Activated T-helper 2 cell treated with anti-CD3 and anti-CD28 coated beads, Interferon-gamma antibody, Interleukin-2, Interleukin-4, amounts not matched to agents 10 μg/mL and 5 μg/mL and 100 μg/mL, durations not matched to agents 14 hours and 24 hours and 36 hours (primary cell): ENCODE measurements at regions of chr7 and their contacts with region 1.

Region 1: GRCh38 chr7:25951031-25951948 is 200.7 kb upstream of the NFE2L3 start:
- DNase-seq: peak; percentile 90
- H3K4me3 Mint-ChIP-seq: peak overlapping the region; percentile 90
- H3K27ac Mint-ChIP-seq: peak overlapping the region; percentile 82
- H3K4me1 Mint-ChIP-seq: peaks cover 13% of the 10 kb centered on the region
- H3K27me3 Mint-ChIP-seq: peaks cover 16% of the 10 kb centered on the region

Region 2: DNA sequence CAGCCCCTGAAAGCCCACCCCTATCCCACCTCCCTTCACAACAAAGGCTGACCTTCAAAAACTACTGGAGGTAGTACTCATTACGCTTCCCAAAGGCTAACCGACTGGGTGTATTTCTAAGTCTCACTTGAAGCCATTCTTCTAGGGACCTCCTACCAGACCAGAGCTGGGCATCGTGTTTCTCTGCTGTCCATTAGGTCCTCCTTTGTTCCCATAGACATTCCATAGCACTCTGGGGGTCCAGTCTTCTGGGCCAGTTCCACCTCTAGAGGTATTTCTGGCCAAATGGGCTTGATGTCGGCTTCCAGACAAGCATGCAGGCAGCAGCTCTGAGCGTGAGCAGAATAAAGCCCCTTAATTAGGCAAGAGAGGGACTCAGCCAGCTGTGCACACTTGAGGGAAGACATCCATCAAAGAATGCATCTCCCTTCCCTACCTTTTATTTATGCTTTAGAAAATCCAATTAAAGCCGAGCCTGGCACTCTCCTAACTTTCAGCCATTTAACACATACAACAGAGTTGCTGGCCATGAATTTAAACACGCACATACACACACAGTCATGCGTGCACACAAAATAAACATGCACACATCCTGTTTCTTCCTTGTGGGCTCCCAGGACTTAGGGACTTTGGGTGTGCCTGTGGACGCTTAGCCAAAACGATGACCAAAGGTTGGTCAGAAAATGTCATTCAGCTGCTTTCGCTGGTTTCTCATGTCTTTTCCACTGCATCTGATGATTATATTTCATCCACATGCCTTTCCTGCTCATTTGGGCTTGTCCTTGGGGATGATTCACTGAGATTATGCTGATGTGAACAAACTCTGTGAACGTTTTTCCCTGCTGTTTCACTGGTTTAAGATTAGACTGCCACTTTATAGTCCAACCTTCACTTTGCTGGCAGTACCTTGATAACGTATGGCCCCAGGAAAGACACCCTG is 161.3 kb before region 1 on chr7:
- intact Hi-C with region 1: no loop called
- DNase-seq: no peak
- H3K4me3 Mint-ChIP-seq: no peak overlapping the region
- H3K27ac Mint-ChIP-seq: no peak overlapping the region
- H3K4me1 Mint-ChIP-seq: no peaks in the 10 kb centered on the region
- H3K27me3 Mint-ChIP-seq: peaks cover 7% of the 10 kb centered on the region

Region 3: GRCh38 chr7:25968205-25968993 is 17.1 kb after region 1 on chr7:
- intact Hi-C with region 1: loop called (anchors 2 kb)
- DNase-seq: no peak
- H3K4me3 Mint-ChIP-seq: no peak overlapping the region
- H3K27ac Mint-ChIP-seq: peak overlapping the region; percentile 35
- H3K4me1 Mint-ChIP-seq: peaks cover 19% of the 10 kb centered on the region
- H3K27me3 Mint-ChIP-seq: peaks cover 31% of the 10 kb centered on the region

Region 4: DNA sequence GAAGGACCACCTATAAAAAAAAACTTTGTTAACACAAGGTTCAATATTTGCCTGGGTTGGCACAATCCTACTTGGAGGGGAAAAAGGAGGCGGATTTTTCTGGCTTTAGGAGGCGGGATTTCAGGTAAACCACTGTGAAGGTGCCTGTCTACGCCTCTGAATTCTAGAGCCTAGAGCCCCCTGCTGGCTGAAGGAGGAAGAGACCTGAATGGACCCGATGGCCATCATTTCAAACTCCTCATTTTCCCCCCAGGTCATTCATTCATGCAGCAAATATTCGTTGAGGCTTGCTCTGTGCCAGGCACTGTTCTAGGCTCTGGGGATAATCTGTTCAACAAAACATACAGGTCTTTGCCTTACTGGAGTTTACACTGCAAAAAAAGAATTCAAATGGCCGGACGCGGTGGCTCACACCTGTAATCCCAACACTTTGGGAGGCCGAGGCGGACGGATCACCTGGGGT is 110.4 kb after region 1 on chr7:
- intact Hi-C with region 1: loop called (anchors 5 kb)
- DNase-seq: peak; percentile 43
- H3K4me3 Mint-ChIP-seq: no peak overlapping the region
- H3K27ac Mint-ChIP-seq: no peak overlapping the region
- H3K4me1 Mint-ChIP-seq: peaks cover 17% of the 10 kb centered on the region
- H3K27me3 Mint-ChIP-seq: peaks cover 17% of the 10 kb centered on the region